Naive thymus-derived CD4-positive, alpha-beta T cell (primary cell): ENCODE measurements at regions of chr22 and their contacts with region 1.

Region 1: GRCh38 chr22:49693416-49693815 is 134.3 kb downstream of the BRD1 start:
- DNase-seq: no peak
- ATAC-seq: no peak
- H3K4me3 ChIP-seq: no peak overlapping the region
- H3K4me3 Mint-ChIP-seq: peak overlapping the region in 3 of 10 donors; percentile 43 to 56 (median 50)
- H3K27ac ChIP-seq: no peak overlapping the region
- H3K27ac Mint-ChIP-seq: peak overlapping the region in 4 of 9 donors; percentile 43 to 80 (median 67)
- H3K4me1 ChIP-seq: peaks cover 0 to 5% of the 10 kb centered on the region in 2 donors
- H3K4me1 Mint-ChIP-seq: peaks cover 0 to 25% (median 18%) of the 10 kb centered on the region in 7 donors
- H3K27me3 ChIP-seq: no peaks in the 10 kb centered on the region
- H3K27me3 Mint-ChIP-seq: peaks cover 0 to 16% (median 0%) of the 10 kb centered on the region in 5 donors

Region 2: GRCh38 chr22:49670456-49671330 is 22.7 kb before region 1 on chr22:
- CTCF ChIA-PET with region 1: no interaction called
- POLR2A ChIA-PET with region 1: no interaction called
- intact Hi-C with region 1: loop called in 1 of 2 experiments (anchors 2 kb)
- DNase-seq: peak in 2 of 9 donors; percentile 23 to 49
- ATAC-seq: peak; percentile 52
- H3K4me3 ChIP-seq: peak overlapping the region; percentile 20
- H3K4me3 Mint-ChIP-seq: peak overlapping the region; percentile 49 to 89 (median 78)
- H3K27ac ChIP-seq: no peak overlapping the region
- H3K27ac Mint-ChIP-seq: peak overlapping the region in 6 of 9 donors; percentile 14 to 78 (median 54)
- H3K4me1 ChIP-seq: peaks cover 5 to 24% of the 10 kb centered on the region in 2 donors
- H3K4me1 Mint-ChIP-seq: peaks cover 14 to 41% (median 33%) of the 10 kb centered on the region in 7 donors
- H3K27me3 ChIP-seq: no peaks in the 10 kb centered on the region
- H3K27me3 Mint-ChIP-seq: peaks cover 10 to 50% (median 10%) of the 10 kb centered on the region in 5 donors

Region 3: DNA sequence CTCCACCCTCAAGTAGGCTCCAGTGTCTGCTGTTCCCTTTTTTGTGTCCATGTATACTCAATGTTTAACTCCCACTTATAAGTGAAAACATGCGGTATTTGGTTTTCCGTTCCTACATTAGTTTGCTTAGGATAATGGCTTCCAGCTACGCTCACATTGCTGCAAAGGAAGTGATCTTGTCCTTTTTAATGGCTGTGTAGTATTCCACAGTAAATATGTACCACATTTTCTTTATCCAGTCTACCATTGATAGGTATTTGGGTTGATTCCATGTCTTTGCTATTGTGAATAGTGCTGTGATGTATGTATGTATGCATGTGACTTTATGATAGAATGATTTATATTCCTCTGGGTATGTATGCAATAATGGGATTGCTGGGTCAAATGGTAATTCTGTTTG is 10.4 kb before region 1 on chr22:
- CTCF ChIA-PET with region 1: no interaction called
- POLR2A ChIA-PET with region 1: no interaction called
- intact Hi-C with region 1: no loop called
- DNase-seq: no peak
- ATAC-seq: no peak
- H3K4me3 ChIP-seq: no peak overlapping the region
- H3K4me3 Mint-ChIP-seq: no peak overlapping the region
- H3K27ac ChIP-seq: no peak overlapping the region
- H3K27ac Mint-ChIP-seq: no peak overlapping the region
- H3K4me1 ChIP-seq: peaks cover 0 to 6% of the 10 kb centered on the region in 2 donors
- H3K4me1 Mint-ChIP-seq: peaks cover 0 to 12% (median 12%) of the 10 kb centered on the region in 7 donors
- H3K27me3 ChIP-seq: no peaks in the 10 kb centered on the region
- H3K27me3 Mint-ChIP-seq: peaks cover 0 to 37% (median 0%) of the 10 kb centered on the region in 5 donors